Gastrocnemius medialis (tissue), 4 donors: ENCODE measurements at regions of chr19 and their contacts with region 1.

Region 1: GRCh38 chr19:9435279-9436268 is at the start of gene ZNF266:
- DNase-seq: peak; percentile 73 to 77
- ATAC-seq: peak; percentile 98 to 99
- H3K4me3 ChIP-seq: peak within 1 kb of the TSS; percentile 76 to 99 (median 90)
- H3K27ac ChIP-seq: peak within 1 kb of the TSS; percentile 82 to 95 (median 90)
- H3K4me1 ChIP-seq: peaks cover 17 to 20% of the 10 kb centered on the region in 2 donors
- H3K27me3 ChIP-seq: no peaks in the 10 kb centered on the region
- CTCF ChIP-seq: peak; percentile 63 to 86 (median 76)
- POLR2A ChIP-seq: peak in 1 of 2 donors; percentile 19
- total RNA-seq, gene ZNF266: 3.7 to 7.0 (median 5.3) TPM

Region 2: GRCh38 chr19:9140159-9140874 is 295.3 kb before region 1 on chr19 and contains the start of gene ZNF317:
- in situ Hi-C with region 1: loop called in 1 of 4 experiments (anchors 25 kb)
- intact Hi-C with region 1: loop called (anchors 10 kb)
- DNase-seq: peak; percentile 87 to 91
- ATAC-seq: peak; percentile 99
- H3K4me3 ChIP-seq: peak within 1 kb of the TSS; percentile 84 to 88 (median 87)
- H3K27ac ChIP-seq: peak within 1 kb of the TSS; percentile 90 to 93 (median 92)
- H3K4me1 ChIP-seq: peaks cover 16 to 23% of the 10 kb centered on the region in 2 donors
- H3K27me3 ChIP-seq: no peaks in the 10 kb centered on the region
- CTCF ChIP-seq: no peak
- POLR2A ChIP-seq: peak; percentile 28 to 70
- total RNA-seq, gene ZNF317: 9.1 to 15.0 (median 12.2) TPM

Region 3: DNA sequence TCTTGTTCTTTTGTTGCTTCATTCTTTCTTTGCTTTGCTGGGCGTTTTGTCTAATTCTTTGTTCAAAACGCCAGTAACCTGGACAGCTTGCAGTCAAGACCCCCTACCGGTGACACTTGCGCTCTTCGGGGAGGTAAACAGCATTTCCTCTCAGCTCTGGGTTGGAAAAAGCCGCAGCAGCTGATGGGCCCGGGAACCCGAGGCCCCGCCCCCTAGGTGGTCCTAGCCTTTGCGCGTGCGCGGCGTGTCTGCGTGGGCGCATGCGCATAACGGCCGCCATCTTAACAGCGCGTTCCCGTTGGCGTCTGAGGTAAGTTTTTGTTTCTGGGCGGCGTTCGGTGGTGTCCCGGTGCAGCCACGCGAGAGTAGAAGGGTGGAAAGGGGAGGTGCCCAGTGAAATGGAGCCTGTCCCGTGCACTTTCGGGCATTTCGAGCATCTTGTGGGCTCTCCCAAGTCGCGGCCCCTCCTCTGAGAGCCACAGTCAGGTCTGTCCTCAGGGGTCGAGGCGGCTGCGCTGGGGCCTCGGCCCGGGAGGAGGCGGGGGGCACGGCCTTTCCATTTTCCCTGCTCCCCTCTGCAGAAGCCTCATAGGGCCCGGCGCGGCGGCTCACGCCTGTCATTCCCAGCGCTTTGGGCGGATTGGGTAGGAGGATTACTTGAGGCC is 111.5 kb before region 1 on chr19 and contains the start of gene ZNF559:
- in situ Hi-C with region 1: no loop called
- intact Hi-C with region 1: loop called (anchors 1 kb)
- DNase-seq: peak; percentile 60 to 78
- ATAC-seq: peak; percentile 76 to 95
- H3K4me3 ChIP-seq: peak within 1 kb of the TSS; percentile 64 to 80 (median 70)
- H3K27ac ChIP-seq: peak within 1 kb of the TSS; percentile 72 to 79 (median 78)
- H3K4me1 ChIP-seq: peaks cover 0 to 6% of the 10 kb centered on the region in 2 donors
- H3K27me3 ChIP-seq: no peaks in the 10 kb centered on the region
- CTCF ChIP-seq: peak in 2 of 5 experiments; percentile 21 to 26
- POLR2A ChIP-seq: no peak
- total RNA-seq, gene ZNF559: 1.4 to 3.8 (median 3.0) TPM

Region 4: GRCh38 chr19:9406798-9407352 is 28.7 kb before region 1 on chr19:
- in situ Hi-C with region 1: no loop called
- intact Hi-C with region 1: loop called (anchors 2 kb)
- DNase-seq: peak; percentile 28 to 70
- ATAC-seq: peak; percentile 62 to 87
- H3K4me3 ChIP-seq: peak overlapping the region; percentile 63 to 73 (median 68)
- H3K27ac ChIP-seq: peak overlapping the region; percentile 21 to 45 (median 22)
- H3K4me1 ChIP-seq: peaks cover 0 to 5% of the 10 kb centered on the region in 2 donors
- H3K27me3 ChIP-seq: no peaks in the 10 kb centered on the region
- CTCF ChIP-seq: no peak
- POLR2A ChIP-seq: no peak

Region 5: DNA sequence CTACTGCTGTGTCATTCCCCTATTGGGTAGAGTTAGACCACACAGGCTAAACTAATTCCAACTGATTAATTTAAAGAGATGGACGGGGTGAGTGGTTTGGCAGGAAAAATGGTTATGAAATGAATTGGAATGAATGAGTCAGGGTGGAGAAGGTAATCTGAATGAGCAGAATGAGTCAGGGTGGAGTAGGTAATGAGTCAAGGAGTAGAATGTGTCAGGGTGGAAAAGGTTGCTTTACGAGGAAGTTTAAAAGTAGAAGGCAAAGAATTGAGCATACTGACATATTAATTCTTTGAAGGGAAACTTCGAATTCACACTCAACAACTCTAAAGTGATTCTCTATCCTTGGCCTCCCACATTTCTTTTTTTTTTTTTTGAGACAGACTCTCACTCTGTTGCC is 161.5 kb after region 1 on chr19:
- in situ Hi-C with region 1: no loop called
- intact Hi-C with region 1: no loop called
- DNase-seq: no peak
- ATAC-seq: no peak
- H3K4me3 ChIP-seq: no peak overlapping the region
- H3K27ac ChIP-seq: no peak overlapping the region
- H3K4me1 ChIP-seq: no peaks in the 10 kb centered on the region
- H3K27me3 ChIP-seq: no peaks in the 10 kb centered on the region
- CTCF ChIP-seq: no peak
- POLR2A ChIP-seq: no peak

Region 6: DNA sequence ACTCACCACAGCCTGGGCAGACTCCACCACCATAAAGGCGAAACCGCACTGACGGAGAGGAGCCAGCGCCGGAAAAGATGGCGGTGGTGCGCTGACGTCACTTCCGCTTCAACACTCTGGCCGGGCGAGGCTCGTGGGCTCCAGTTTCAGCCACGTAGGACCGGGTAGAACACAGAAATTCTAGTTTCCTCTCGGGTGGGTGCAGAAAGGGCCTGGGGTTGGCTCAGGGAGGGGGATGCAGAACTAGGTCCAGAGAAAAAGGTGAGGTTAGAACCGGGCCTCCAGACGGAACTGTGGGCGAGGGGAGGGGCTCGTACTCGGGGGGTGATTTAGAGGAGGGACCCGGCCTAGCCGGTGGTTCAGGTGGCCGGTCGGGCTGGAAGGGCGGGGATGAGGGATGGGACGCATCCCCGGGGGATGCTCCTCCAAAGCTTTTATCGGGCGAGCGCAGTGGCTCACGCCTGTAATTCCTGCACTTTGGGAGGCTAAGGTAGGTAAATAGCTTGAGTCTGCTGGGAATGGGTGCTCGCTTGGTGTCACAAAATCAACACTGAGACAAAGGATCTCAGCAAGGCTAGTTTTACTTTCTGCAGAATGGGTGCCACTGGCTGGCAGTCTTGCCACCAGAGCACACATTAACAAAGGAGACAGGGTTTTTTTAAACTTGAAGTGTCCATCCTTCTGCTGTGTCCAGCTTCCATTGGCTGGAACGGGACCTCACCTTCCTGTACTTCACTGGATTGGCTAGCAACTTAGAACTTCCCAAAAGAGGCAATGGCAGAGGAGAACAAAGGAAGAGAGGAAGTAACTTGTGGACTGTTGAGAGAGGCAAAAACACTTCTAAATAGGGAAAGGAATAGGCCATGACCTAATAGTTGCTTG is 185.8 kb after region 1 on chr19 and contains the start of gene ZNF561:
- in situ Hi-C with region 1: no loop called
- intact Hi-C with region 1: loop called (anchors 1 kb)
- DNase-seq: peak; percentile 70
- ATAC-seq: peak; percentile 96 to 98
- H3K4me3 ChIP-seq: peak within 1 kb of the TSS; percentile 70 to 96 (median 86)
- H3K27ac ChIP-seq: peak within 1 kb of the TSS; percentile 82 to 92 (median 90)
- H3K4me1 ChIP-seq: peaks cover 14 to 22% of the 10 kb centered on the region in 2 donors
- H3K27me3 ChIP-seq: no peaks in the 10 kb centered on the region
- CTCF ChIP-seq: no peak
- POLR2A ChIP-seq: no peak
- total RNA-seq, gene ZNF561: 8.7 to 17.5 (median 14.4) TPM

Region 7: GRCh38 chr19:9796113-9796773 is 360.7 kb after region 1 on chr19:
- in situ Hi-C with region 1: no loop called
- intact Hi-C with region 1: loop called (anchors 10 kb)
- DNase-seq: peak; percentile 60 to 74
- ATAC-seq: peak; percentile 51 to 69
- H3K4me3 ChIP-seq: no peak overlapping the region
- H3K27ac ChIP-seq: no peak overlapping the region
- H3K4me1 ChIP-seq: peaks cover 0 to 3% of the 10 kb centered on the region in 2 donors
- H3K27me3 ChIP-seq: peaks cover 0 to 15% (median 12%) of the 10 kb centered on the region in 3 donors
- CTCF ChIP-seq: peak; percentile 60 to 77 (median 72)
- POLR2A ChIP-seq: no peak

Region 8: GRCh38 chr19:9818734-9819589 is 383.4 kb after region 1 on chr19 and contains the start of gene FBXL12:
- in situ Hi-C with region 1: no loop called
- intact Hi-C with region 1: loop called (anchors 5 kb)
- DNase-seq: peak; percentile 100
- ATAC-seq: peak; percentile 88 to 91
- H3K4me3 ChIP-seq: peak within 1 kb of the TSS; percentile 93 to 100 (median 95)
- H3K27ac ChIP-seq: peak within 1 kb of the TSS; percentile 91 to 100 (median 98)
- H3K4me1 ChIP-seq: peaks cover 10 to 23% of the 10 kb centered on the region in 2 donors
- H3K27me3 ChIP-seq: no peaks in the 10 kb centered on the region
- CTCF ChIP-seq: no peak
- POLR2A ChIP-seq: peak; percentile 71 to 79
- total RNA-seq, gene FBXL12: 7.6 to 28.4 (median 15.1) TPM